ENCODE measurements at regions of chr16 and their contacts with region 1.

Region 1: DNA sequence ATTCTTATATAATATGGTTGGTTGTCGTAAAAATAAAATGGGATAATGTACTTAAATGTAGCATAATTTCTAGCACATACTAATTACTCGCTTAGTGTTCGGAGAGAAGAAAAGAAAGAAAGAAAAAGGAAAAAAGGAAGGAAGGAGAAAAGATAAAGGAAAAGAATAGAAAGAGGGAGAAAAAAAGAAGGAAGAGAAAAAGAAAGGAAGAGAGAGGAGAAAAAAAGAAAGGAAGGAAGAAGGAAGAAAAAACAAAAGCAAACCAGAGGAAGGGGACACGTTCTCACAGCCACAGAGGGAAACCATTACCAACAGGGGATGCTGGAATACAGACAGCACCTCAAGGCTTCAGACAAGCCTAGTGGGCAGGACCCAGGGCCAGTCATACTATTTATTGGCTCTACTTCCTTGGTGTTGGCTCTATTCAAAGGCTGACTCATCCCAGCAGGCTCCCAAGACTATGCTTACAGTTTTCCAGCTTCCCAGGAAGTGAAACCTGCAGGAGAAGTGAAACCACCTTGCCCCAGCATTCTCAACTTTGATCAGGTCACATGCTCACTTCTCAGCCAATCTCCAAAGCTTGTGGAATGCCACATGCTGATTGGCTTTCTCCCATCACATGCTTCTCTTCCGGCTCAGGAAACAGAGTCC is 273.5 kb upstream of the IRX5 start:
- DNase-seq: peak in 1 of 5 donors; percentile 22
- ATAC-seq: peak in 2 of 4 donors; percentile 79 to 84
- H3K4me3 ChIP-seq: no peak overlapping the region
- H3K27ac ChIP-seq: no peak overlapping the region
- H3K4me1 ChIP-seq: peaks cover 0 to 35% (median 14%) of the 10 kb centered on the region in 12 donors
- H3K27me3 ChIP-seq: no peaks in the 10 kb centered on the region
- CTCF ChIP-seq: no peak
- POLR2A ChIP-seq: no peak

Region 2: GRCh38 chr16:54526916-54527315 is 130.3 kb before region 1 on chr16:
- intact Hi-C with region 1: loop called in 1 of 10 experiments (anchors 5 kb)
- DNase-seq: no peak
- ATAC-seq: no peak
- H3K4me3 ChIP-seq: no peak overlapping the region
- H3K27ac ChIP-seq: no peak overlapping the region
- H3K4me1 ChIP-seq: peaks cover 0 to 36% (median 5%) of the 10 kb centered on the region in 12 donors
- H3K27me3 ChIP-seq: no peaks in the 10 kb centered on the region
- CTCF ChIP-seq: no peak
- POLR2A ChIP-seq: no peak